Calu3 (cell line): ENCODE measurements at regions of chr10 and their contacts with region 1.

Region 1: GRCh38 chr10:62732841-62733653 is 71.5 kb upstream of the ADO start:
- DNase-seq: peak; percentile 62
- H3K4me3 Mint-ChIP-seq: peak overlapping the region; percentile 30
- H3K27ac Mint-ChIP-seq: no peak overlapping the region
- H3K4me1 Mint-ChIP-seq: peaks cover 3% of the 10 kb centered on the region
- H3K27me3 Mint-ChIP-seq: no peaks in the 10 kb centered on the region
- CTCF ChIP-seq: no peak

Region 2: GRCh38 chr10:62554632-62555199 is 178.3 kb before region 1 on chr10:
- CTCF ChIA-PET with region 1: no interaction called
- intact Hi-C with region 1: no loop called
- DNase-seq: peak; percentile 22
- H3K4me3 Mint-ChIP-seq: no peak overlapping the region
- H3K27ac Mint-ChIP-seq: no peak overlapping the region
- H3K4me1 Mint-ChIP-seq: no peaks in the 10 kb centered on the region
- H3K27me3 Mint-ChIP-seq: peaks cover 20% of the 10 kb centered on the region
- CTCF ChIP-seq: peak; percentile 51

Region 3: GRCh38 chr10:62637249-62638061 is 95.6 kb before region 1 on chr10:
- CTCF ChIA-PET with region 1: no interaction called
- intact Hi-C with region 1: loop called (anchors 10 kb)
- DNase-seq: peak; percentile 3
- H3K4me3 Mint-ChIP-seq: no peak overlapping the region
- H3K27ac Mint-ChIP-seq: no peak overlapping the region
- H3K4me1 Mint-ChIP-seq: no peaks in the 10 kb centered on the region
- H3K27me3 Mint-ChIP-seq: no peaks in the 10 kb centered on the region
- CTCF ChIP-seq: no peak

Region 4: DNA sequence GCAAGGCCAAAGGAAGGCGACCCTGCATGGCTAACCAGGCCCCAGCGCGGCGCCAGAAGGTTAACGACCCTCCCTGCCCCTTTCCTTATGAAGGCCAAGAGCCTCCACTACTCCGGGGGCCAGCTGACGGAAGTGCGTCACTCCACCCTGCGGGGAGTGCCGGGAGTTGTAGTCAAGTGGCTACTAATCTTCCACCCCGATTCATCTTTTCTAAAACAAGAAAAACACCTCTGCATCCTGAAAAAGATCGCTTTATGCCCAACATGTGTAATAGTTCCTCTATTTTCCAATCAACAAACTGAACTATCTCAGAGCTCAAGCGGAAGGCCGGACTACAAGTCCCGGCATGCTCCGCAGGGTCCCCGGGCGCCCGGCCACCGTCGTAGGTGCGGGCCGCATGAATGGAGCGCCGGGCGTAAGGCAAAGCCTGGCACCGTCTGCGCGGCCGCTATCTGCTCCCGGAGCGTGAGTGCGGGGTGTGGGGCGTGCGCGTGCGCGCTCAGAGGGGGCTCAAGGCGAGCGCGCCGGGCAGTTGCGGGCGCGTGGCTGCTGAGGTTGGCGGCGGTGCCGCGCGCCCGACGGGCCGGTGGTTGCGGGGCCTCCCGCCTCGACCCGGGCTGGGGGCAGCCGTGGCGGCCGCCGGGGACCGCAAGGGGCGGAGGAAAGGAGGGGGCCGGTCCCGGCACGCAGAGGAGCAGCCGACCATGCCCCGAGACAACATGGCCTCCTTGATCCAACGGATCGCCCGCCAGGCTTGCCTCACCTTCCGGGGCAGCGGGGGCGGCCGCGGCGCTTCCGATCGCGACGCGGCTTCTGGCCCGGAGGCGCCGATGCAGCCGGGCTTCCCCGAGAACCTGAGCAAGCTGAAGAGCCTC is 71.5 kb after region 1 on chr10 and contains the start of gene ADO:
- CTCF ChIA-PET with region 1: interaction called, 7 read pairs
- intact Hi-C with region 1: loop called (anchors 1 kb)
- DNase-seq: peak; percentile 89
- H3K4me3 Mint-ChIP-seq: peak within 1 kb of the TSS; percentile 92
- H3K27ac Mint-ChIP-seq: peak within 1 kb of the TSS; percentile 99
- H3K4me1 Mint-ChIP-seq: peaks cover 29% of the 10 kb centered on the region
- H3K27me3 Mint-ChIP-seq: peaks cover 15% of the 10 kb centered on the region
- CTCF ChIP-seq: no peak
- total RNA-seq, gene ADO: 32.3 and 35.0 TPM in 2 replicates

Region 5: DNA sequence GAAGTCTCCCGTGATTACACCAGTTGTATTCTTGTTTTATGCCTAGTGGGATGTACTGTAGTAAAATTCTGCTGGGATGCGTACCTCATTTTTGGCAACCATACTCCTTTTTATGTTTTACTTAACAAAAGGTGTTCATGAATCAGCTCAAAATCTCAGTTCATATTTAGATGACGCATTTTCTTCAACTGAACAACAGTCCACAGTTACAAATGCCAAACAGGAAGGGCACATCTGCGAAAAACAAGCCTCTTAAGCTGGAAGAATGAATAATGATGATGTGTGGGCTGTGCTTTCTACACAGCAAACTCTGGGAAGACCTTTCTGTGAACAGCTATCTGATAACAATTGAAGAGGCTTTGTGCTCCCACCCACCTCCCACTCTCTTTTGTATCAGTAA is 331.7 kb after region 1 on chr10:
- CTCF ChIA-PET with region 1: no interaction called
- intact Hi-C with region 1: no loop called
- DNase-seq: no peak
- H3K4me3 Mint-ChIP-seq: no peak overlapping the region
- H3K27ac Mint-ChIP-seq: no peak overlapping the region
- H3K4me1 Mint-ChIP-seq: no peaks in the 10 kb centered on the region
- H3K27me3 Mint-ChIP-seq: peaks cover 44% of the 10 kb centered on the region
- CTCF ChIP-seq: no peak